ENCODE measurements at regions of chr10 and their contacts with region 1.

Region 1: DNA sequence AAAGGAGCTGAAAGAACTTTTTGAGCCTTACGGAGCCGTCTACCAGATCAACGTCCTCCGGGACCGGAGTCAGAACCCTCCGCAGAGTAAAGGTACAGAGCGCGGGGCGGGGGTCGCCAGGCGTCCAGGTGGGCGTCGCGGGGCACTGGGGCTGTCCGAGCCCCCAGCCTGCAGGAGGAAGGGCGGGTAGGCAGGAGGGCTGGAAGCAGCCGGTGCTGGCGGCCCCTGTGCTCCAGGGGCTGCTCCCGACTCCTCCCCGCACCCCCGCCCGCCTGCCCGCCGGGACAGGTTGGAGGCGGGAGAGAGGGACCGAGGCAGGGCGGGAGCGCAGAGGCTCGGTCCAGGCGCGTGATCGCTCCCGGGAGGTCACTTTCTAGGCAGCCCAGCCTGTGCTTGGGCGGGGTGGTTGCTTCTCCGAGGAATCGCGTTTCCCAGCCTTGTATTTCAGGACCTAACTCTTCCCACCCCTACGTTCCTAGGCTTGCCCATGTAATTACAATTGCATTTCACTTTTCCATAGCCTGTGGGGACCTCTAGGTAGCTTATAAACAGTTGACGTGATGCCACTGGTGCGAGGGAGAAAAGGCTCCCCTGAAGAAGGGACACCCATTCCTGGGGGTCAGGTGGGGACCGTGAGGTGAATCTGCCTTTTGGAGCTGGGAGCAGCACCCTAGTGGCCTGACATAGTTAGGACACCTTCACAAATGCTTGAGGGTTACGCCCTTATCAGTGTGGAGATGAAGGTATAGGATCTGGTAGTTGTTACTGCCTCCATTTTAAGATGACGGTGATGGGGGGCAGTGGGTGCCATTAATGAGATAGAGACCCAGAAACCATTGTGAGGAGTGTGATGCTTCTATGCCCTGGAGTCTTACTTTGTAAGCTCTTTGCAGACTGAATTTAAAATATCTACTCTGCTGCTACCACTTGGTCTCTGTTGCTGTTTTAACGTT is 148.2 kb downstream of the CELF2 start:
- DNase-seq: peak; percentile 92
- H3K4me3 Mint-ChIP-seq: no peak overlapping the region
- H3K27ac Mint-ChIP-seq: peak overlapping the region; percentile 96
- H3K4me1 Mint-ChIP-seq: peaks cover 40% of the 10 kb centered on the region
- H3K27me3 Mint-ChIP-seq: no peaks in the 10 kb centered on the region

Region 2: DNA sequence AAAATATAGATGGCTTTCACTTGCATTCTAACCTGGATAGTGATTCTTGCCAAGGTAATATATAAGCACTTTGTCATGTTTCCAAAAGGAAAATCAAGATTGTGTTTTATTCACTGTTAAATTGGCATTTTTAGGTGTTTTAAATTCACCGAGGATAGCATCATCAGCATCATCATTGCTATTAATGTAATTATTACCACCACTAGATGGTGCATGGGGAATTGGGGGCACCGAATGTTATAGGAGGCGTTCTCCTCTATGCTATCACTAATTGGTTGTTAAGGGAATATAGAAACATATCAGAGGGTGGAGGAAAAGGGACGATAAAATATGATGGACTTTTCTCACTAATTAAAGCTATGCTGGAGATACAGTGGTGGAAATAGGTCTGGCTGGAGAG is 52.7 kb before region 1 on chr10:
- intact Hi-C with region 1: loop called (anchors 2 kb)
- DNase-seq: peak; percentile 68
- H3K4me3 Mint-ChIP-seq: no peak overlapping the region
- H3K27ac Mint-ChIP-seq: no peak overlapping the region
- H3K4me1 Mint-ChIP-seq: peaks cover 8% of the 10 kb centered on the region
- H3K27me3 Mint-ChIP-seq: peaks cover 7% of the 10 kb centered on the region

Region 3: DNA sequence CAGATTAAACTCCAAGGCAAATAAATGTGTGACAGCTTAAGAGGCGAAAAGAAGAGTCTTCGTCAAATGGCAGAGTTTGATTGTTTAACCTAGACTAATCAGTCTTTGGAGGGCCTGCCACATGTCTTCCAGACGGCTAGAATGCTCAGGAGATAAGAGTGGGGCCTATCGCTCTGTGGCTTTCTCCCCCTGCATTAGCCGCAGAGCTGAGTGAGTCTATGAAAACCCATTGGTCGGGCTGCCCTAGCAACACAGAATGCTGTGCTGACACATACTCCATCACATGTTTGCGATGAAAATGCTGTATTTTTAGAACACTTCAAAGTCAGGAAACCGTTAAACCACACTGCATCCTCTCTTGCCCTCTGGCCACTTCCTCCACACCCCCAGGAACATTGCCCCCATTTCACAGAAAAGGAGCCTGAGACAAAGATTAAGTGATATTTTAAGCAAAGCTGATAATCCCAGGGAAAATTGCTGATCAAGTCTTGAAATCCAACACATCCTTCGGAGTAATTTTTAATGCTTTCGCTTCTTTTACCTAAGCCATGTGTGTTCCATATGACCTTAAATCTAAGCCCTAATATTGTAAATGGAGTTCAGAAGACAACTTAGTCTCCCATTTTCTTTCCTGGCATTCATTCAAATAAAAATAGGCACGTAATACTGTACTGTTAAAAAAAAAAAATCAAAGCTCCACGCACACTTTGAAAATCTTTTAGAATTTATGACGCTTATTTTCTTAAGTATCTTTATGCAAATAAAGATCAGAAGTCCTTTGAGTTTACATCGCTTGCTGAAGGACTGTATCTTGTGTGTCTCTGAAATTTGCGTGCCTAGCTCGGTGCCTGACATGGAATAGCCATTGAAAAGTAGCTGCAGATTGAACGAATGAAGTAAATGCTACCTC is 13.0 kb after region 1 on chr10:
- intact Hi-C with region 1: loop called (anchors 1 kb)
- DNase-seq: peak; percentile 96
- H3K4me3 Mint-ChIP-seq: no peak overlapping the region
- H3K27ac Mint-ChIP-seq: peak overlapping the region; percentile 94
- H3K4me1 Mint-ChIP-seq: peaks cover 90% of the 10 kb centered on the region
- H3K27me3 Mint-ChIP-seq: no peaks in the 10 kb centered on the region

Region 4: GRCh38 chr10:11236234-11236633 is 70.4 kb after region 1 on chr10:
- intact Hi-C with region 1: loop called (anchors 1 kb)
- DNase-seq: peak; percentile 81
- H3K4me3 Mint-ChIP-seq: peak overlapping the region; percentile 78
- H3K27ac Mint-ChIP-seq: peak overlapping the region; percentile 96
- H3K4me1 Mint-ChIP-seq: peaks cover 74% of the 10 kb centered on the region
- H3K27me3 Mint-ChIP-seq: no peaks in the 10 kb centered on the region